H1 (cell line): ENCODE measurements at regions of chr2 and their contacts with region 1.

Region 1: GRCh38 chr2:73176881-73177644 is 25.3 kb upstream of the NOTO start:
- DNase-seq: peak; percentile 43 to 97
- H3K4me3 ChIP-seq: peak overlapping the region; percentile 24 to 64 (median 54); a peak in 7 of 8 replicates
- H3K27ac ChIP-seq: no peak overlapping the region
- H3K4me1 ChIP-seq: peaks cover 2 to 23% (median 11%) of the 10 kb centered on the region in 4 experiments; a peak in 6 of 7 replicates
- H3K27me3 ChIP-seq: peaks cover 22 to 59% (median 45%) of the 10 kb centered on the region in 4 experiments
- CTCF ChIP-seq: peak; percentile 87 to 99 (median 96)
- EP300 ChIP-seq: peak in 1 of 2 experiments; percentile 20; a peak in 1 of 3 replicates
- POLR2A ChIP-seq: no peak
- RAD21 ChIP-seq: peak; percentile 87 to 90

Region 2: GRCh38 chr2:72887754-72888437 is 289.2 kb before region 1 on chr2:
- CTCF ChIA-PET with region 1: interaction called, 58 read pairs
- POLR2A ChIA-PET with region 1: no interaction called
- DNase-seq: peak; percentile 81 to 96
- H3K4me3 ChIP-seq: peak overlapping the region; percentile 47 to 68 (median 65)
- H3K27ac ChIP-seq: no peak overlapping the region
- H3K4me1 ChIP-seq: peaks cover 0 to 8% (median 1%) of the 10 kb centered on the region in 4 experiments; a peak in 5 of 7 replicates
- H3K27me3 ChIP-seq: peaks cover 4 to 36% (median 24%) of the 10 kb centered on the region in 4 experiments
- CTCF ChIP-seq: peak; percentile 79 to 98 (median 97)
- EP300 ChIP-seq: no peak; a peak in 1 of 3 replicates
- POLR2A ChIP-seq: no peak
- RAD21 ChIP-seq: peak; percentile 41 to 65

Region 3: GRCh38 chr2:72993147-72993932 is 183.7 kb before region 1 on chr2:
- CTCF ChIA-PET with region 1: interaction called, 33 read pairs
- POLR2A ChIA-PET with region 1: no interaction called
- DNase-seq: peak in 1 of 2 experiments; percentile 82
- H3K4me3 ChIP-seq: no peak overlapping the region
- H3K27ac ChIP-seq: no peak overlapping the region
- H3K4me1 ChIP-seq: peaks cover 0 to 2% (median 0%) of the 10 kb centered on the region in 4 experiments; a peak in 3 of 7 replicates
- H3K27me3 ChIP-seq: no peaks in the 10 kb centered on the region; a peak in 3 of 7 replicates
- CTCF ChIP-seq: peak; percentile 62 to 81 (median 71)
- EP300 ChIP-seq: no peak
- POLR2A ChIP-seq: no peak
- RAD21 ChIP-seq: peak; percentile 69 to 74

Region 4: GRCh38 chr2:73085691-73086360 is 91.2 kb before region 1 on chr2:
- CTCF ChIA-PET with region 1: interaction called, 31 read pairs
- POLR2A ChIA-PET with region 1: interaction called, 4 read pairs
- DNase-seq: peak; percentile 57 to 96
- H3K4me3 ChIP-seq: no peak overlapping the region
- H3K27ac ChIP-seq: no peak overlapping the region
- H3K4me1 ChIP-seq: peaks cover 0 to 9% (median 5%) of the 10 kb centered on the region in 4 experiments; a peak in 6 of 7 replicates
- H3K27me3 ChIP-seq: no peaks in the 10 kb centered on the region
- CTCF ChIP-seq: peak; percentile 94 to 95 (median 95)
- EP300 ChIP-seq: no peak
- POLR2A ChIP-seq: no peak
- RAD21 ChIP-seq: peak; percentile 97 to 98

Region 5: DNA sequence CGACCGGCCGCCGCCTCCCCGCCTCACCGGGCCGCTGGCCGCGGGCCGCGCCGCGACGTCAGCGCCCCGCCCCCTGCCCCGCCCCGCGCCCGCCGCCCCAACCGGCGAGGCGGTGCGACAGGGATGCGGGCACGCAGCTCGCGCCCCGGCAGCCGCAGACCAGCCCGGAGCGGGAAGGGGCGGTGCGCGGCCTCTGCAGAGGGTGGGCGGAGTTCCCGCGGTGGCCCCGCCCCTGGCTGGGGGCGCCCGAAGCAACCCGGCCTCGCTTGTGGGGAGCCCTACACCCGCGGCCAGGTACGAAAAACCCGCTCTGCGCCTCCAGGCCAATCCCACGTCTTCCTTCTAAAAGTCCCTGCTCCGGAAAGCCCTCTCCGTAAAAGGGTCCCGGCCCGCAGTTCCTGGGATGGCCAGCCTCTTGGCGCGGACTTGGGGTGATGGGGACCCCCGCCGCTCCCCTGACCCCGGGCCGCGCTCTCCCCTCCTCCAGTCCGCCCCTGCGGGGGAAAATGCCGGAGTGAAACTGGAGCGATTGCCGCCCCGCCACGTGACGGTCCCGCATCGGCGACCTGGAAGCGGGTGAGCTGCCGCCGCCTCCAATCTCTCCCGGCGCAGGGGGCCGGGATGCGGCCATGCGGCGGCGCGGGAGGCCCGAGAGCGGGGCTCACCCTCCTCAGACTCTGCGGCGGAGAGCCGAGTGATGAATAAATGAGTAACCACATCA is 64.0 kb before region 1 on chr2 and contains the start of gene RAB11FIP5:
- CTCF ChIA-PET with region 1: interaction called, 28 read pairs
- POLR2A ChIA-PET with region 1: interaction called, 3 read pairs
- DNase-seq: peak in 1 of 2 experiments; percentile 91
- H3K4me3 ChIP-seq: peak within 1 kb of the TSS; percentile 58 to 73 (median 66)
- H3K27ac ChIP-seq: no peak within 1 kb of the TSS
- H3K4me1 ChIP-seq: peaks cover 10 to 14% (median 12%) of the 10 kb centered on the region in 4 experiments; a peak in 6 of 7 replicates
- H3K27me3 ChIP-seq: no peaks in the 10 kb centered on the region; a peak in 2 of 7 replicates
- CTCF ChIP-seq: no peak
- EP300 ChIP-seq: no peak
- POLR2A ChIP-seq: 0 out of 3 replicates have a peak, but pooled peaks of 1 of the 2 experiments have one; percentile 26
- RAD21 ChIP-seq: no peak
- total RNA-seq, gene RAB11FIP5: 13.5 and 17.0 TPM in 2 replicates

Region 6: DNA sequence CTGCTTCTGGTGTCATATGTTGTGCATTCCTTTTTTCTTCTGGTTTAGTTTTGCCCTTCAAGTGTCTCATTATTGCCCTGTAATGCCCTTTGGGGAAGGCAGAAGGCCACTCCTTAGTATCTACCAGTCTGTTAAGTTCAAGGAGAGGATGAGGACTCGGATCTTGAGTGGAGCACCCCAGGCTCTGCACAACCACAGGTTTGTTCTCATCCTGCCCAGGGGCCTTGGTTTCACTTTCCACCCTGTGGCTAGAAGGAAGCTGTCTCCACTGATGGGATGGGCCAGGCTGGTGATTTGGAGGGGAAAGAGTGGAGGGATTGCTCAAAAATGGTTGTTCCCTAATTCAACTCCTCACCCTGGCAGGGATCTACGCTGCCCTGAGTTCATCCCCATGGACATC is 34.1 kb before region 1 on chr2:
- CTCF ChIA-PET with region 1: no interaction called
- POLR2A ChIA-PET with region 1: no interaction called
- DNase-seq: no peak
- H3K4me3 ChIP-seq: no peak overlapping the region
- H3K27ac ChIP-seq: no peak overlapping the region
- H3K4me1 ChIP-seq: no peaks in the 10 kb centered on the region
- H3K27me3 ChIP-seq: peaks cover 0 to 3% (median 0%) of the 10 kb centered on the region in 4 experiments; a peak in 1 of 7 replicates
- CTCF ChIP-seq: no peak
- EP300 ChIP-seq: no peak
- POLR2A ChIP-seq: no peak
- RAD21 ChIP-seq: no peak

Region 7: DNA sequence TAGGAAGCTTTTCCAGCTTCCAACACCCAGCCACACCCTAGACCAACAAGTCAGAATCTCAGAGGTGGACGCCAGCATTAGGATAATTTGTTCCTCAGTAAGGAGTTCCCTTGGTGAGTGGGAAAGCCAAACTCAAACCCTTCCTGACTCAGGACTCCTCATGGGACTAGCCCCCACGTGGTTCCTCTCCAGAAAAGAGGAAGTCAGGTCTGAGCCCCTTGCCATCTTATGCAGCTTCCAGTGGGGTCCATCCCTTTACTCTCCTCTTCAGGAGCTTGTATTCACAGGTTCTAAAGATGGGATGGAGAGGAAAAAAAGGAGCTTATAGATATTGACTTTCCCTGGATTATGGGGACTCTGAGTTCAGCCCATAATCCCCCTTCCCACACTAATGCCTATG is 10.5 kb after region 1 on chr2:
- CTCF ChIA-PET with region 1: interaction called, 42 read pairs
- POLR2A ChIA-PET with region 1: no interaction called
- DNase-seq: no peak
- H3K4me3 ChIP-seq: no peak overlapping the region
- H3K27ac ChIP-seq: no peak overlapping the region
- H3K4me1 ChIP-seq: peaks cover 0 to 9% (median 2%) of the 10 kb centered on the region in 4 experiments; a peak in 4 of 7 replicates
- H3K27me3 ChIP-seq: peaks cover 0 to 5% (median 0%) of the 10 kb centered on the region in 4 experiments; a peak in 1 of 7 replicates
- CTCF ChIP-seq: no peak
- EP300 ChIP-seq: no peak
- POLR2A ChIP-seq: no peak
- RAD21 ChIP-seq: no peak

Region 8: GRCh38 chr2:73293534-73294171 is 116.6 kb after region 1 on chr2 and contains the start of gene EGR4:
- CTCF ChIA-PET with region 1: interaction called, 11 read pairs
- POLR2A ChIA-PET with region 1: no interaction called
- DNase-seq: peak; percentile 59 to 89
- H3K4me3 ChIP-seq: peak within 1 kb of the TSS; percentile 44 to 68 (median 52)
- H3K27ac ChIP-seq: no peak within 1 kb of the TSS
- H3K4me1 ChIP-seq: peaks cover 0 to 11% (median 3%) of the 10 kb centered on the region in 4 experiments; a peak in 4 of 7 replicates
- H3K27me3 ChIP-seq: peaks cover 28 to 64% (median 57%) of the 10 kb centered on the region in 4 experiments
- CTCF ChIP-seq: peak in 1 of 3 experiments; percentile 20; a peak in 1 of 4 replicates
- EP300 ChIP-seq: no peak
- POLR2A ChIP-seq: peak in 1 of 2 experiments; percentile 54; a peak in 1 of 3 replicates
- RAD21 ChIP-seq: no peak; a peak in 1 of 4 replicates
- total RNA-seq, gene EGR4: 0.20 TPM in 1 of 2 replicates, not detected in the other

Region 9: GRCh38 chr2:73359915-73360697 is 183.0 kb after region 1 on chr2:
- CTCF ChIA-PET with region 1: no interaction called
- POLR2A ChIA-PET with region 1: no interaction called
- DNase-seq: no peak
- H3K4me3 ChIP-seq: no peak overlapping the region
- H3K27ac ChIP-seq: no peak overlapping the region
- H3K4me1 ChIP-seq: no peaks in the 10 kb centered on the region
- H3K27me3 ChIP-seq: no peaks in the 10 kb centered on the region
- CTCF ChIP-seq: peak in 1 of 3 experiments; percentile 39; a peak in 2 of 4 replicates
- EP300 ChIP-seq: no peak
- POLR2A ChIP-seq: no peak
- RAD21 ChIP-seq: peak; percentile 35 to 47